ENCODE measurements at regions of chr11 and their contacts with region 1.

Region 1: GRCh38 chr11:45543808-45544422 is 121.5 kb downstream of the CHST1 start:
- DNase-seq: no peak
- ATAC-seq: no peak
- H3K4me3 ChIP-seq: no peak overlapping the region
- H3K27ac ChIP-seq: no peak overlapping the region
- H3K4me1 ChIP-seq: no peaks in the 10 kb centered on the region
- H3K27me3 ChIP-seq: peaks cover 67% of the 10 kb centered on the region
- CTCF ChIP-seq: no peak
- POLR2A ChIP-seq: no peak
- RAD21 ChIP-seq: no peak

Region 2: GRCh38 chr11:45580399-45580798 is 36.5 kb after region 1 on chr11:
- CTCF ChIA-PET with region 1: no interaction called
- POLR2A ChIA-PET with region 1: no interaction called
- RAD21 ChIA-PET with region 1: no interaction called
- intact Hi-C with region 1: loop called (anchors 5 kb)
- DNase-seq: no peak
- ATAC-seq: no peak
- H3K4me3 ChIP-seq: no peak overlapping the region
- H3K27ac ChIP-seq: no peak overlapping the region
- H3K4me1 ChIP-seq: peaks cover 2 to 6% of the 10 kb centered on the region in 2 experiments; a peak in 3 of 4 replicates
- H3K27me3 ChIP-seq: peaks cover 61% of the 10 kb centered on the region
- CTCF ChIP-seq: no peak
- POLR2A ChIP-seq: no peak
- RAD21 ChIP-seq: no peak

Region 3: GRCh38 chr11:45713573-45713972 is 169.7 kb after region 1 on chr11:
- CTCF ChIA-PET with region 1: no interaction called
- POLR2A ChIA-PET with region 1: no interaction called
- RAD21 ChIA-PET with region 1: no interaction called
- intact Hi-C with region 1: no loop called
- DNase-seq: no peak
- ATAC-seq: no peak
- H3K4me3 ChIP-seq: no peak overlapping the region
- H3K27ac ChIP-seq: no peak overlapping the region
- H3K4me1 ChIP-seq: no peaks in the 10 kb centered on the region
- H3K27me3 ChIP-seq: peaks cover 87% of the 10 kb centered on the region
- CTCF ChIP-seq: no peak
- POLR2A ChIP-seq: no peak
- RAD21 ChIP-seq: no peak

Region 4: GRCh38 chr11:45949992-45950407 is 406.1 kb after region 1 on chr11:
- CTCF ChIA-PET with region 1: no interaction called
- POLR2A ChIA-PET with region 1: no interaction called
- RAD21 ChIA-PET with region 1: no interaction called
- intact Hi-C with region 1: no loop called
- DNase-seq: no peak
- ATAC-seq: no peak
- H3K4me3 ChIP-seq: no peak overlapping the region
- H3K27ac ChIP-seq: no peak overlapping the region
- H3K4me1 ChIP-seq: no peaks in the 10 kb centered on the region
- H3K27me3 ChIP-seq: no peaks in the 10 kb centered on the region
- CTCF ChIP-seq: no peak
- POLR2A ChIP-seq: no peak
- RAD21 ChIP-seq: no peak

Measured in HCT116 (cell line).